Ovary (tissue), 10 donors: ENCODE measurements at regions of chr14 and their contacts with region 1.

Region 1: GRCh38 chr14:67837011-67837624 is 17.5 kb downstream of the RAD51B start:
- DNase-seq: peak; percentile 42 to 77 (median 58)
- H3K4me3 ChIP-seq: no peak overlapping the region
- H3K27ac ChIP-seq: no peak overlapping the region
- H3K4me1 ChIP-seq: no peaks in the 10 kb centered on the region
- H3K27me3 ChIP-seq: no peaks in the 10 kb centered on the region
- CTCF ChIP-seq: peak; percentile 24 to 86 (median 78)
- EP300 ChIP-seq: no peak
- POLR2A ChIP-seq: no peak

Region 2: GRCh38 chr14:68843471-68844209 is 1006.5 kb after region 1 on chr14:
- intact Hi-C with region 1: loop called in 1 of 4 experiments (anchors 5 kb)
- DNase-seq: peak; percentile 71 to 91 (median 85)
- H3K4me3 ChIP-seq: peak overlapping the region; percentile 28
- H3K27ac ChIP-seq: peak overlapping the region in 1 of 2 donors; percentile 5
- H3K4me1 ChIP-seq: peaks cover 8% of the 10 kb centered on the region
- H3K27me3 ChIP-seq: no peaks in the 10 kb centered on the region
- CTCF ChIP-seq: peak; percentile 57 to 93 (median 81)
- EP300 ChIP-seq: no peak
- POLR2A ChIP-seq: no peak